ENCODE measurements at regions of chr18 and their contacts with region 1.

Region 1: GRCh38 chr18:12890506-12890905 is 6.5 kb upstream of the PTPN2 start:
- DNase-seq: no peak
- H3K4me3 ChIP-seq: no peak overlapping the region
- H3K27ac ChIP-seq: no peak overlapping the region
- H3K4me1 ChIP-seq: no peaks in the 10 kb centered on the region
- H3K27me3 ChIP-seq: no peaks in the 10 kb centered on the region
- CTCF ChIP-seq: no peak

Region 2: GRCh38 chr18:12726774-12727550 is 163.5 kb before region 1 on chr18:
- intact Hi-C with region 1: loop called (anchors 5 kb)
- DNase-seq: peak in 1 of 2 donors; percentile 71
- H3K4me3 ChIP-seq: no peak overlapping the region
- H3K27ac ChIP-seq: no peak overlapping the region
- H3K4me1 ChIP-seq: no peaks in the 10 kb centered on the region
- H3K27me3 ChIP-seq: no peaks in the 10 kb centered on the region
- CTCF ChIP-seq: peak; percentile 86 to 96 (median 89)

Region 3: DNA sequence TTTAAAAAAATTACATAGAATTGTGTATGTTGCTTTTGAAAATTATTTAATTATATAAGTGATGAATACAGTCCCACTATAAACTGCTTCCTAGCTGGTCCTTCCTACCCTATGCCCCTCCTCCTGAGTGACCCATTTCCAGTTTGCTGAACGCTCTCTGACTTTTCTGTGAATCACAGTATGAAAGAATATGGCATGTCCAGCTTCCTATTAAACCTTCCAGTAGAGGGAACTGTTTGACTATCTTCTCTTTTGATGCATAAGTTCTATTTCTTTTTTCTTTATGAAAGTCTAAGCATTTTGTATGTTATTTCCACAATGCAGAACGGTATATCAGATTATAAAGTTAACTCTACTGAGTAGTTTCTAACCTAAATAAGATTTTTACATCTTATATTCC is 146.4 kb before region 1 on chr18:
- intact Hi-C with region 1: loop called (anchors 5 kb)
- DNase-seq: no peak
- H3K4me3 ChIP-seq: no peak overlapping the region
- H3K27ac ChIP-seq: no peak overlapping the region
- H3K4me1 ChIP-seq: no peaks in the 10 kb centered on the region
- H3K27me3 ChIP-seq: no peaks in the 10 kb centered on the region
- CTCF ChIP-seq: peak in 2 of 3 experiments; percentile 37 to 57

Region 4: GRCh38 chr18:12934454-12935071 is 44.1 kb after region 1 on chr18:
- intact Hi-C with region 1: loop called (anchors 5 kb)
- DNase-seq: peak in 1 of 2 donors; percentile 90
- H3K4me3 ChIP-seq: no peak overlapping the region
- H3K27ac ChIP-seq: no peak overlapping the region
- H3K4me1 ChIP-seq: no peaks in the 10 kb centered on the region
- H3K27me3 ChIP-seq: no peaks in the 10 kb centered on the region
- CTCF ChIP-seq: peak; percentile 88 to 93 (median 90)

Measured in ascending aorta (tissue), 2 donors.